Heart left ventricle (tissue), 16 donors: ENCODE measurements at regions of chr7 and their contacts with region 1.

Region 1: GRCh38 chr7:8724080-8724718 is 290.8 kb downstream of the NXPH1 start:
- DNase-seq: peak in 2 of 5 donors; percentile 15 to 29
- ATAC-seq: no peak
- H3K4me3 ChIP-seq: no peak overlapping the region
- H3K27ac ChIP-seq: no peak overlapping the region
- H3K4me1 ChIP-seq: no peaks in the 10 kb centered on the region
- H3K27me3 ChIP-seq: no peaks in the 10 kb centered on the region
- CTCF ChIP-seq: peak; percentile 22 to 56 (median 35)
- POLR2A ChIP-seq: no peak

Region 2: DNA sequence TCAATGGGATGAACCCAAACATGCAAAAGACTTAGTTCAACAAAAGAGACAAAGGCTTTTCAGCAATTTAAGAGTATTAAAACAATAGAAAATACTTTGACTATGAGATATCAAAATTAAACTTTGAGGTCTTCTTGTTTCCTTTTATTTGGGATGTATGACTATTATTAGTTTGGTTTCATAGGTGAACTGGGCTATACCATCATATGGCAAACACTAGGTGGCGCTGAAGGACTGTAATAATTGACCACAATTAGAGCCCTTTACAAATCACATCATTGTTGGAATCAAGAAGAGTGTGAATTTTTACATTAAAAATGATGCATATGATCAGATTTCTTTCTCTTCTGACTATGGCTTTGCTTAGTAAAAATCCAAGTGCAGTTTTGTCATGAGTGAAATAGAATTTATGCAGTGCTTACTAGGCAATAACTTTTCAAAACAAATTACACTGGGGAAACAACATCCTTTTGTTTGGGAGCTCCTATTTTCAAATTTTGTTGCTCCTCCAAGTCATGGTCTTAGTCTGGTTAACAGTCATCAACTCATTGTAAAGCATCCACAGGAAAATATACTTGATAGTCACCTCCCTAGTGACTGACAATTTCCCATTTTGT is 305.5 kb before region 1 on chr7:
- intact Hi-C with region 1: loop called in 3 of 10 experiments (anchors 5 to 10 kb)
- DNase-seq: peak in 3 of 5 donors; percentile 23 to 38 (median 33)
- ATAC-seq: peak in 1 of 4 donors; percentile 62
- H3K4me3 ChIP-seq: no peak overlapping the region
- H3K27ac ChIP-seq: no peak overlapping the region
- H3K4me1 ChIP-seq: no peaks in the 10 kb centered on the region
- H3K27me3 ChIP-seq: peaks cover 0 to 20% (median 0%) of the 10 kb centered on the region in 9 donors
- CTCF ChIP-seq: peak; percentile 59 to 83 (median 74)
- POLR2A ChIP-seq: no peak

Region 3: DNA sequence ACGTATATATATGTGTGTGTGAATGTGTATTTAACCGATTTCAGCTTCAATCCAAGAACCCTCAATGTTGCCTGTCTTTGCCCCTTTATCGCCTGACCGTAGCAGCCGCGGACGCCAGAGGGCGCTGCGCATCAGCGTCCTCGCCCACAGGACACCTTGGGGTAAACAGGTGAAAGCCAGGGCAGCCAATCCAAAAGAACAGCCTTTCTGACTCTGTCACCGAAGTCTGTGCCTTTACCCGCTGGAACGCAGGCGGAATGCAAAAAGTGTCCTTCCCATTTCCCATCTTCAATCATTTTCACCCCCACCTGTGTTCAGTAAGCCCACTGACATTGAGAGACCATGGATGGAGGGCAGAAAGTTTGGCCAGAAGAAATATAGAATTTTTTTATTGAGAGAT is 287.2 kb before region 1 on chr7:
- intact Hi-C with region 1: loop called in 4 of 10 experiments (anchors 5 to 10 kb)
- DNase-seq: no peak
- ATAC-seq: no peak
- H3K4me3 ChIP-seq: no peak overlapping the region
- H3K27ac ChIP-seq: no peak overlapping the region
- H3K4me1 ChIP-seq: peaks cover 0 to 33% (median 0%) of the 10 kb centered on the region in 12 donors
- H3K27me3 ChIP-seq: peaks cover 55 to 100% (median 89%) of the 10 kb centered on the region in 9 donors
- CTCF ChIP-seq: peak in 11 of 12 donors; percentile 25 to 54 (median 40)
- POLR2A ChIP-seq: no peak

Region 4: DNA sequence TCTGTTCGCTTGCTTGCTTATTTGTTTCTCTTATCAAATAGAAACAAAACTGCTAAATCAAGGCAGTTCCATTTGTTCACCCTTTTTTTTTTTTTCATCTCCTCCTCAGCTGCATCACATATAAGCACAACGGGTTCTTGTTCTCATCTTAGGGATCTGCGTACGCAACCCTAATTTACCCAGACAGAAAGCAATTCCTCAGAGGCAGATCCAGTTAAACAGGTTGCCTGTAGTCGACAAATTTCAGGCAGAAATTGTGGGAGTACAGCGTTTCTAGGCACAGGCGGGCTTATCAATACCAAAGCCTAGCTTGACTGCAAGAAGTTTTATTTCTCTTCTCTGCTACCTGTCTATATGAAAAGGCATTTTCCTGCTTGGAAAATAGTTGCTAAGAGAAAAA is 274.6 kb after region 1 on chr7:
- intact Hi-C with region 1: no loop called
- DNase-seq: no peak
- ATAC-seq: no peak
- H3K4me3 ChIP-seq: no peak overlapping the region
- H3K27ac ChIP-seq: no peak overlapping the region
- H3K4me1 ChIP-seq: no peaks in the 10 kb centered on the region
- H3K27me3 ChIP-seq: no peaks in the 10 kb centered on the region
- CTCF ChIP-seq: no peak
- POLR2A ChIP-seq: no peak